MCF 10A (cell line): ENCODE measurements at regions of chr20 and their contacts with region 1.

Region 1: GRCh38 chr20:4637081-4637797 is 84.5 kb upstream of the PRND start:
- DNase-seq: peak; percentile 9
- H3K4me3 Mint-ChIP-seq: no peak overlapping the region
- H3K27ac Mint-ChIP-seq: no peak overlapping the region
- H3K4me1 Mint-ChIP-seq: peaks cover 5% of the 10 kb centered on the region
- H3K27me3 Mint-ChIP-seq: no peaks in the 10 kb centered on the region
- CTCF ChIP-seq: no peak

Region 2: DNA sequence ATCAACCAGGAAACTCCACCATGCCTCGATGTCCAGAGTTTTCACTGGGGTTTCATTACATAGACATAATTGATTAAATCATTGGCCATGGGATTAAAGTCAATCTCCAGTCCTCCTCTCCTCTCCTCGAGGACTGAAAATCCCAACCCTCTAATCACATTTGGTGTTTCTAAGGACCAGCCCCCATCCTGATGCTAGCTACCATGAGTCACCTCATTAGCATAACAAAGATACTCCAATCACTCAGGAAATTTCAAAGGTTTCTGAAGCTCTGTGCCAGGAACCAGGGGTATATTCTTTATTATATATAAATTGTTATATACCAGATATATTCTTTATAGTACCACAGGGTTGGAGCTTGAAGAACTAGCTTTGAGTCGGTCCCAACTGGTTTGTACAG is 128.5 kb before region 1 on chr20:
- CTCF ChIA-PET with region 1: no interaction called
- POLR2A ChIA-PET with region 1: no interaction called
- intact Hi-C with region 1: no loop called
- DNase-seq: no peak
- H3K4me3 Mint-ChIP-seq: no peak overlapping the region
- H3K27ac Mint-ChIP-seq: no peak overlapping the region
- H3K4me1 Mint-ChIP-seq: peaks cover 16% of the 10 kb centered on the region
- H3K27me3 Mint-ChIP-seq: no peaks in the 10 kb centered on the region
- CTCF ChIP-seq: no peak

Region 3: DNA sequence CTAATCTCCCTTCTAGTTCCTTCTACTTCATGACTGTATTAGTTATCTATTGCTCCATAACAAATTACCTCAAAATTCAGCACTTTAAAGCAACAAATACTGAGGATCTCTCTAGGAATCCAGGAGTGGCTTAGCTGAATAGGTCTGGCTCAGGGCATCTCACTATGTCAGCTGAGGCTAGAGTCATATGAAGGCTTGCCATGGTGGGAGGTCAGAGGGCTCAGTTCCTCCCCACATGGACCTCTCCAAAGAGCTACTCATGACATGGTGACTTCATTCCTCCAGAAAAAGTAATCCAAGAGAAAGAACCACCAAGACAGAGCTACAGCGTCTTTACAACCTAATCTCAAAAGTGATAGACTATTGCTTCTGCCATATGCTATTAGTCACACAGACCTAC is 14.3 kb after region 1 on chr20:
- CTCF ChIA-PET with region 1: no interaction called
- POLR2A ChIA-PET with region 1: interaction called, 12 read pairs
- intact Hi-C with region 1: no loop called
- DNase-seq: no peak
- H3K4me3 Mint-ChIP-seq: no peak overlapping the region
- H3K27ac Mint-ChIP-seq: no peak overlapping the region
- H3K4me1 Mint-ChIP-seq: no peaks in the 10 kb centered on the region
- H3K27me3 Mint-ChIP-seq: no peaks in the 10 kb centered on the region
- CTCF ChIP-seq: no peak

Region 4: GRCh38 chr20:4666001-4666479 is 28.8 kb after region 1 on chr20:
- CTCF ChIA-PET with region 1: no interaction called
- POLR2A ChIA-PET with region 1: interaction called, 20 read pairs
- intact Hi-C with region 1: no loop called
- DNase-seq: peak; percentile 80
- H3K4me3 Mint-ChIP-seq: peak overlapping the region; percentile 62
- H3K27ac Mint-ChIP-seq: peak overlapping the region; percentile 72
- H3K4me1 Mint-ChIP-seq: peaks cover 32% of the 10 kb centered on the region
- H3K27me3 Mint-ChIP-seq: no peaks in the 10 kb centered on the region
- CTCF ChIP-seq: no peak